ENCODE measurements at regions of chr22 and their contacts with region 1.

Region 1: GRCh38 chr22:28882878-28883656 is at the start of gene ZNRF3:
- DNase-seq: peak; percentile 88
- ATAC-seq: peak; percentile 85
- H3K4me3 Mint-ChIP-seq: peak within 1 kb of the TSS; percentile 92
- H3K27ac Mint-ChIP-seq: peak within 1 kb of the TSS; percentile 73
- H3K4me1 Mint-ChIP-seq: peaks cover 47% of the 10 kb centered on the region
- H3K27me3 Mint-ChIP-seq: peaks cover 11% of the 10 kb centered on the region
- CTCF ChIP-seq: no peak
- total RNA-seq, gene ZNRF3: 20.6 to 25.4 TPM (median 21.6 TPM) in 3 replicates

Region 2: DNA sequence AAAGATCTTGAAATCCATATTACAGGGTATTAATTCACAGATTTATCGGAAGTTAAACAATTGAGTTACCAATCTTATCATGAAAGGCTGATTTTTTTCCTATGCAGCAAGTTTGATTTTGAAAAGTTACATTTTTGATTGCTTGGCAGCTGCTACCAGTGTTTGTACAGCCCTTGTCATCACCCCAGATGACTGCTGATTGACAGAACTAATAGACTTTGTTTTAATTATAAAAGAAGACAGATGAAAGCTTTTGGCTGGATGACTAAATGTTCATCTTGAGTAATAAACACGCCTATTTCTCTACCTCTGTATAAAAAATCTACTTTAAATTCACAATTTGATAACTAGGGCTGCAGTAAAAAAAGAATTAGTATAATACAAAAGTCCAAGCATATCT is 463.1 kb before region 1 on chr22:
- CTCF ChIA-PET with region 1: no interaction called
- POLR2A ChIA-PET with region 1: interaction called, 10 read pairs
- DNase-seq: no peak
- ATAC-seq: no peak
- H3K4me3 Mint-ChIP-seq: no peak overlapping the region
- H3K27ac Mint-ChIP-seq: no peak overlapping the region
- H3K4me1 Mint-ChIP-seq: peaks cover 20% of the 10 kb centered on the region
- H3K27me3 Mint-ChIP-seq: no peaks in the 10 kb centered on the region
- CTCF ChIP-seq: no peak

Region 3: DNA sequence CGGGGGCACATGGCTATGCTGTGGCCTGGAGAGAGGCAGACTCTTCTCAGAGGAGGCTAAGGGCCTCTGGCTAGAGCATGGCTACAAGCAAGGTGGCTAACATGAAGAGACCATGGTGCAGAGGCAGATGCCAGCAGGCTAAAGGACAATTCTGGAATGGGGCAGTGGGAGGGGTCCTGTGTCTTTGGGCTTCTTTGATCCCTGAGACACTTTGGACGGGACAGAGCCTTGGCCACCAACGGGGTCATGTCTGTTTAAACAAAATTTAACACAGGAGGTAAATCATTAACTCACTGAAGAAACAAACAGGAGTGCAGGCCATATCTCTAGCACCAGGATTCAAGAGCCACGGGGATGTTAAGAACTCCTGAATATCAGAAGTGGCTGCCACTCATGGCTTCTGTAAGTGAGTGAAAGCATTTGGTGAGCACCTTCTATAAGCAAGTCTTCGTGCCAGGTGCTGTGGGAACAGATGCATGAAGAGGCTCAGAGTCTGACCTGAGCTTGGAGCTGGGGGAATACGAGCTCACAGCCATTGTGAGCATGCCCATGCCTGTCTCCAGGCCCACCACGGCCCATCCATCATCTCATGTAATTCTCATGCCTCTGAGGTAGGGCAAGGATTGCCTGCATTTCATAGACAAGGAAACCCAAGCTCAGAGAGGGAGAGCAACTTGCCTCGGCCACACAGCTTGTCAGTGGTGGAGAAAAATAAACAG is 18.0 kb before region 1 on chr22:
- CTCF ChIA-PET with region 1: no interaction called
- POLR2A ChIA-PET with region 1: no interaction called
- DNase-seq: no peak
- ATAC-seq: no peak
- H3K4me3 Mint-ChIP-seq: no peak overlapping the region
- H3K27ac Mint-ChIP-seq: no peak overlapping the region
- H3K4me1 Mint-ChIP-seq: no peaks in the 10 kb centered on the region
- H3K27me3 Mint-ChIP-seq: no peaks in the 10 kb centered on the region
- CTCF ChIP-seq: no peak

Region 4: GRCh38 chr22:28937206-28938025 is 54.3 kb after region 1 on chr22:
- CTCF ChIA-PET with region 1: no interaction called
- POLR2A ChIA-PET with region 1: no interaction called
- DNase-seq: no peak
- ATAC-seq: no peak
- H3K4me3 Mint-ChIP-seq: no peak overlapping the region
- H3K27ac Mint-ChIP-seq: 0 out of 2 replicates have a peak overlapping the region, but pooled peaks have one; percentile 72
- H3K4me1 Mint-ChIP-seq: peaks cover 68% of the 10 kb centered on the region
- H3K27me3 Mint-ChIP-seq: no peaks in the 10 kb centered on the region
- CTCF ChIP-seq: no peak

Region 5: GRCh38 chr22:28951969-28952521 is 69.0 kb after region 1 on chr22:
- CTCF ChIA-PET with region 1: interaction called, 10 read pairs
- POLR2A ChIA-PET with region 1: no interaction called
- DNase-seq: peak; percentile 30
- ATAC-seq: peak; percentile 66
- H3K4me3 Mint-ChIP-seq: no peak overlapping the region
- H3K27ac Mint-ChIP-seq: 0 out of 2 replicates have a peak overlapping the region, but pooled peaks have one; percentile 8
- H3K4me1 Mint-ChIP-seq: peaks cover 56% of the 10 kb centered on the region
- H3K27me3 Mint-ChIP-seq: no peaks in the 10 kb centered on the region
- CTCF ChIP-seq: no peak

Region 6: GRCh38 chr22:28969401-28970168 is 86.5 kb after region 1 on chr22:
- CTCF ChIA-PET with region 1: no interaction called
- POLR2A ChIA-PET with region 1: no interaction called
- DNase-seq: no peak
- ATAC-seq: peak; percentile 31; the same call in 1 of the 2 replicates
- H3K4me3 Mint-ChIP-seq: no peak overlapping the region
- H3K27ac Mint-ChIP-seq: peak overlapping the region; percentile 86
- H3K4me1 Mint-ChIP-seq: peaks cover 27% of the 10 kb centered on the region
- H3K27me3 Mint-ChIP-seq: no peaks in the 10 kb centered on the region
- CTCF ChIP-seq: no peak

Region 7: DNA sequence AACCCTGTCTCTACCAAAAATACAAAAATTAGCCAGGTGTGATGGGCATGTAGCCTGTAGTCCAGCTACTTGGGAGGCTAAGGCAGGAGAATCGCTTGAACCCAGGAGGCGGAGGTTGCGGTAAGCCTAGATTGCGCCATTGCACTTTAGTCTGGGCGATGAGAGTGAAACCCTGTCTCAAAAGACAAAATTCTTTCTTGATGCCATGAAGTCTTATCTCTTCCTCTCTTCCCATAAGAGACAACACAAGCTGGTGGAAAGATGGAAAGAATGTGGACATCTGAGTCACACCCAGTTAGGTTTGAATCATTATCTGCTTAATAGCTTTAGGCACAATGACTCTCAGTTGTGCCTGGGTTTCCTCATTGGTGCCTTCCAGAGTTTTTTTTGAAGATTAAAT is 225.0 kb after region 1 on chr22:
- CTCF ChIA-PET with region 1: no interaction called
- POLR2A ChIA-PET with region 1: interaction called, 11 read pairs
- DNase-seq: no peak
- ATAC-seq: no peak
- H3K4me3 Mint-ChIP-seq: no peak overlapping the region
- H3K27ac Mint-ChIP-seq: no peak overlapping the region
- H3K4me1 Mint-ChIP-seq: peaks cover 7% of the 10 kb centered on the region; the same call in 1 of the 2 replicates
- H3K27me3 Mint-ChIP-seq: no peaks in the 10 kb centered on the region
- CTCF ChIP-seq: no peak